ENCODE measurements at regions of chr12 and their contacts with region 1.

Region 1: GRCh38 chr12:56041552-56042429 is at the start of gene RPS26:
- DNase-seq: peak; percentile 95
- H3K4me3 ChIP-seq: peak within 1 kb of the TSS; percentile 81
- H3K27me3 ChIP-seq: no peaks in the 10 kb centered on the region
- CTCF ChIP-seq: peak; percentile 58
- polyA plus RNA-seq, gene RPS26: 635 and 868 TPM in 2 replicates

Region 2: DNA sequence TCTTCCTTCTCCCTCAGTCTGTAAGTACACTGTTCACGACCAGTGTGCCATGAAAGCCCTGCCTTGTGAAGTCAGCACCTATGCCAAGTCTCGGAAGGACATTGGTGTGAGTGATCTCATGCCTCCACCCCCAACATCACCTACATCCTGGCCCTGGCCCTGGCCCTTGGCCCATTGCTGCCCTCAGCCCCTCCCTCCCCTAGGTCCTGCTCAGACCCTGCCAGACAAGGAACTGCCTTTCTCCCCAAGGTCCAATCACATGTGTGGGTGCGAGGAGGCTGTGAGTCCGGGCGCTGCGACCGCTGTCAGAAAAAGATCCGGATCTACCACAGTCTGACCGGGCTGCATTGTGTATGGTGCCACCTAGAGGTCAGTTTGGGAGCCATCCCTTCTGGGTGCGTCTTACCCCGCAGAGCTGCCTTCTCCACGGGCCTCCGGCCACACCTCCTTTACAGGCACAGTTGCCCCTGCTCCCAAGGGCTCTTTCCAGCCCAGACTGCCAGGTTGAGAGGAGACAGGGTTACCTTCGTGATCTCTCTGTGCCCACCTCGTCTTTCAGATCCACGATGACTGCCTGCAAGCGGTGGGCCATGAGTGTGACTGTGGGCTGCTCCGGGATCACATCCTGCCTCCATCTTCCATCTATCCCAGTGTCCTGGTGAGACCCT is 101.6 kb before region 1 on chr12:
- CTCF ChIA-PET with region 1: no interaction called
- POLR2A ChIA-PET with region 1: no interaction called
- DNase-seq: no peak
- H3K4me3 ChIP-seq: no peak overlapping the region
- H3K27me3 ChIP-seq: no peaks in the 10 kb centered on the region
- CTCF ChIP-seq: peak; percentile 95

Region 3: DNA sequence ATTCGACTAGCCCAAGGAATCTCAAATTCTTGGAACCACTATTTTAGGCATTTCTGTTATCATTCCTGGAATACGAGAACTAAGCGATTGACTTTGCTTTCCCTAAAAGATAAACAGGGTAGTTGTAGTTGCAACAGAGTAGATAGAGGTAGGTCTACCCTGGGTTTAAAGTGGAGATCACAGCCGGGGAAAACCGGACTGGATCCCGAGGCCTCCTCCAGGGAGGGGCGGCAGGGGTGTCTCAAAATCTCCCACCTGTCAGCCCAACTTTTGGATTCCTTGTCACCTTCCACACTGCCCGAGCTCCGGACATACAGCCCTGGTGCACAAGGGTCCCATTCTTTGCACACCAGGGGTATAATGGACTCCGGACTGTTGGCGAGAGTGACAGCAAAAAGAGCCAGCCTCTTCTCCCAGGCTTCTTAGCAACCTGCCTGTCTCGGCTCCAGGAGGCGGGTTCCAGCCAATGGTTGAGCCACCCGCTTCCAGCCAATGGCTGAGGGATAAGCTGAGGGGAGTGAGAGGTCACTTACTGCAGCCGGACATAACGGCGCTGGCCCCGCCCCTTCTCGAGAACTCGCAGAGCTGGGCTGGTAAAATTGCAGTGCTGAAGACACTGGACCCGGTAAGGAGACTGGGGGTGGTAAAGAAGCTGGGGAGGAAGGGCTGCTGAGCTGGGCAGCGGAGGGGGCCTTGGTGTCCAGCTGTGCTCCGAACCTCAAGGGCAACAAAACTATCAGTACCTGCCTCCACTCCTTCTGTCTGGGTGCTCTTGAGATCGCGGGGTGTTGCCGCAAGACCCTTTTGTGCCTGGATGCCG is 44.9 kb before region 1 on chr12 and contains the start of gene SUOX:
- CTCF ChIA-PET with region 1: interaction called, 19 read pairs
- POLR2A ChIA-PET with region 1: interaction called, 3 read pairs
- DNase-seq: peak; percentile 89
- H3K4me3 ChIP-seq: peak within 1 kb of the TSS; percentile 72
- H3K27me3 ChIP-seq: no peaks in the 10 kb centered on the region
- CTCF ChIP-seq: no peak
- polyA plus RNA-seq, gene SUOX: 14.4 and 22.3 TPM in 2 replicates

Region 4: DNA sequence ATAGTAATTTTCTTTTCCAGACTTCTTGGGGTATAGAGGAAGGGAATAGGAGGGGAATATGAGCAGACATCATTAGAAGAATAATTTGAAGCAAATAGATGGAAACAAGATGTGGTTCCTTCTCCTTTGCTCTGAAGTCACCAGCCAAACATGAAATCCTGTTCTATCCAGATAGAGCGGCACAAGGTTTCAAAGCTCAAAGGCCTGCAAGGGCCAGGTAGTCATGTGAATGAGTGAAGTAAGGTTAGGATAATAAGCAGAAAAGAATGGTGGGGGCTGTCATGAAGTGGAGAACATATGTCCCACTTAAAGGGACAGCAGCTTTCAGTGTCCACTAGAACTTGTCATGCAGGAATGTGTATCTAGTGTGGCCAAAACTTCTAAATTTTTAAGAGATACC is 23.4 kb before region 1 on chr12:
- CTCF ChIA-PET with region 1: no interaction called
- POLR2A ChIA-PET with region 1: no interaction called
- DNase-seq: no peak
- H3K4me3 ChIP-seq: no peak overlapping the region
- H3K27me3 ChIP-seq: no peaks in the 10 kb centered on the region
- CTCF ChIP-seq: no peak

Region 5: DNA sequence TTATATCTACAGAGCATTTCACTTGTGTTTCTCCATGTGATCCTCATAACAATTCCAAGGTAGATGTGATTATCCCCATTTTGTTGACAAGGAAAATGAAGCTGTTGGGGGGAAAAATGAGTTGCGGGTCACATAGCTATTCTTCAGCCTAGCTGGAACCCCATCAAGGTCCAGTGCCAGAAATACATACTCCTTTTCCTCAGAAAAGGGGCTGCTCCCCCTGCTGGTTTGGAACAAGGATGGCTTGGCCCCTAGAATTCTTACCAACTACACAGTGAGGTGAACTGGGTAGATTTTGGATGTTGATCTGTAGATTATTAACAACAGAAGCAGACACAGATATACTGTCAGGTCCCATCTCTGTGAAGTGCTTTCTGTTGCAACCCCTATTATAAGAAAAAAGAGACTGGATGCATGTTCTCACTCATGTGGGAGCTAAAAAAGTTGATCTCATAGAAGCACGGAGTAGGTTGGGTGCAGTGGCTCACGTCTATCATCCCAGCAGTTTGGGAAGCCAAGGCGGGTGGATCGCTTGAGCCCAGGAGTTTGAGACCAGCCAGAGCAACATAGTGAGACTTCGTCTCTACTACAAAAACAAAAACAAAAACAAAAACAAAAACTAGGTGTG is 12.0 kb before region 1 on chr12:
- CTCF ChIA-PET with region 1: interaction called, 27 read pairs
- POLR2A ChIA-PET with region 1: no interaction called
- DNase-seq: no peak
- H3K4me3 ChIP-seq: no peak overlapping the region
- H3K27me3 ChIP-seq: no peaks in the 10 kb centered on the region
- CTCF ChIP-seq: peak; percentile 86

Region 6: GRCh38 chr12:56062996-56063395 is 21.2 kb after region 1 on chr12:
- CTCF ChIA-PET with region 1: interaction called, 13 read pairs
- POLR2A ChIA-PET with region 1: no interaction called
- DNase-seq: no peak
- H3K4me3 ChIP-seq: no peak overlapping the region
- H3K27me3 ChIP-seq: no peaks in the 10 kb centered on the region
- CTCF ChIP-seq: no peak

Region 7: GRCh38 chr12:56078990-56079664 is 37.3 kb after region 1 on chr12:
- CTCF ChIA-PET with region 1: interaction called, 14 read pairs
- POLR2A ChIA-PET with region 1: no interaction called
- DNase-seq: peak; percentile 44
- H3K4me3 ChIP-seq: peak overlapping the region; percentile 50
- H3K27me3 ChIP-seq: peaks cover 5% of the 10 kb centered on the region
- CTCF ChIP-seq: peak; percentile 84

Region 8: DNA sequence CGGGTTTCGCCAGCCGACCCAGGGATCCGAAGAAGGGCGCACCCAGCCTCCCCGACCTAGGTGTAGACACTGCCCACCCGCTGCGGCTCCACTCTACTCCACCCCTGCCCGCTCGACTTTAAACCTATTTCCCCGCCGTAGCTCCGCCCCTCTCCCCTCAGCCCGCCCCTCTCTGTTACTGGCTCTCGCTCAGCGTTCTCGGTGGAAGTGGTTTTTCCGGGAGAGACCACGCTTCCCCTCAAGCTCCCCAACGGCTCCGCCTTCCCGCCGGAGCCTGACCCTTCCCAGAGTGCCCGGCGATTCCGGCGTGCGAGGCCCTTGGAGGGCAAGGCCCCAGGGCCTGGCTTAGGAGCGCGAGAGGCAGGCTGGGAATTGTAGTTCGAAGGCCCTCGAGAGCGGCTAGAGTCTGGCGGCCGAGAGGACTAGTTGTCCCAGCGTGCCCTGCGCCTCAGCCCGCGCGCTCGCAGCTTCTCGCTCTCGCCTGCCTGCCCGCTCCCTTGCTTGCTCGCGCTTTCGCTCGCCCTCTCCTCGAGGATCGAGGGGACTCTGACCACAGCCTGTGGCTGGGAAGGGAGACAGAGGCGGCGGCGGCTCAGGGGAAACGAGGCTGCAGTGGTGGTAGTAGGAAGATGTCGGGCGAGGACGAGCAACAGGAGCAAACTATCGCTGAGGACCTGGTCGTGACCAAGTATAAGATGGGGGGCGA is 62.5 kb after region 1 on chr12 and contains the start of gene PA2G4:
- CTCF ChIA-PET with region 1: interaction called, 10 read pairs
- POLR2A ChIA-PET with region 1: no interaction called
- DNase-seq: peak; percentile 97
- H3K4me3 ChIP-seq: peak within 1 kb of the TSS; percentile 94
- H3K27me3 ChIP-seq: no peaks in the 10 kb centered on the region
- CTCF ChIP-seq: no peak
- polyA plus RNA-seq, gene PA2G4: 134 and 215 TPM in 2 replicates

Region 9: GRCh38 chr12:56299853-56300643 is 258.3 kb after region 1 on chr12 and contains the start of gene CS:
- CTCF ChIA-PET with region 1: no interaction called
- POLR2A ChIA-PET with region 1: no interaction called
- DNase-seq: peak; percentile 73
- H3K4me3 ChIP-seq: peak within 1 kb of the TSS; percentile 85
- H3K27me3 ChIP-seq: no peaks in the 10 kb centered on the region
- CTCF ChIP-seq: no peak
- polyA plus RNA-seq, gene CS: 117 and 150 TPM in 2 replicates

Measured in BJ (cell line).